Vagina (tissue), 2 donors: ENCODE measurements at regions of chr16 and their contacts with region 1.

Region 1: GRCh38 chr16:84617791-84618580 is at the start of gene COTL1:
- DNase-seq: peak in 1 of 2 donors; percentile 97
- H3K4me3 ChIP-seq: peak within 1 kb of the TSS; percentile 70 to 75
- H3K27ac ChIP-seq: peak within 1 kb of the TSS; percentile 76
- H3K4me1 ChIP-seq: peaks cover 30% of the 10 kb centered on the region
- H3K27me3 ChIP-seq: no peaks in the 10 kb centered on the region
- CTCF ChIP-seq: peak in 1 of 3 experiments; percentile 13
- POLR2A ChIP-seq: peak in 1 of 2 donors; percentile 93
- total RNA-seq, gene COTL1: 67.8 TPM

Region 2: GRCh38 chr16:84511180-84511824 is 106.7 kb before region 1 on chr16:
- intact Hi-C with region 1: loop called (anchors 2 kb)
- DNase-seq: no peak
- H3K4me3 ChIP-seq: no peak overlapping the region
- H3K27ac ChIP-seq: no peak overlapping the region
- H3K4me1 ChIP-seq: peaks cover 5% of the 10 kb centered on the region
- H3K27me3 ChIP-seq: no peaks in the 10 kb centered on the region
- CTCF ChIP-seq: peak; percentile 84 to 95 (median 93)
- POLR2A ChIP-seq: no peak

Region 3: GRCh38 chr16:84589975-84590719 is 27.8 kb before region 1 on chr16:
- intact Hi-C with region 1: loop called (anchors 1 kb)
- DNase-seq: no peak
- H3K4me3 ChIP-seq: no peak overlapping the region
- H3K27ac ChIP-seq: no peak overlapping the region
- H3K4me1 ChIP-seq: no peaks in the 10 kb centered on the region
- H3K27me3 ChIP-seq: no peaks in the 10 kb centered on the region
- CTCF ChIP-seq: no peak
- POLR2A ChIP-seq: no peak

Region 4: DNA sequence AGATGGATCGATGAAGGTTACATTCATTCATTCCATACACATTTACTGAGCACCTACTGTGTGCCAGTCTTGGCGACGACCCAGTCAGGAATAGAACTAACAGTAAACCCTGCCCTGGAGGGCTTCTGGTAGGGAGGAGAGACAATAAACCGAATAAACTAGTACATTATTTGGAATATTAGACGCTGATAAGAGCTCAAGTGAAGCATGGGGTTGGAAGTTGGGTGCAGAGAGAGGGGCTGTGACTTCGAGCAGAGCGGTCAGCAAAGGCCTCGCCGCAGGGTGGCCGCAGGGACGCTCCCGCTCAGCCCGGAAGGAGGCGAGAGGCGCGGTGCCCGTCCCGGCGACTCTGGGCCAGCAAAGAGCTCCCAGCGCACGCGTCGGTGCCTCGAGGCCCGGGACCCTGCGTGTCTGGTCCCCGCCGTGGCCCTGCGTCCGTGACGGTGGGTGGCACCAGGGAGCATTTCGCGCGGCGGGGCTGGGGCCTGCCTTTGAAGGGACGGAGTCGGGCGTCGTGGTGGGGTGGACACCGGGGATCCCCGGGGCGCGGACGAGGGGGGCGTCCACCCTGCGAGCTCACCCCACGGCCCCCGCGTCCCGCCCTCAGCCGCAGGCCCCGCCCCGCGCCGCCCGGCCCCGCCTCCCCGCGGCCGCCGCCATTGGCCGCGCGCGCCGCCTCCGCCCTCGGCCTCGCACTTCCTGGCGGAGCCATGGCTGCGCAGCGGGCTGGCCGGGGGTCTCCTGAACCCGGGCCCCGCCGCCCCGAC is 30.0 kb after region 1 on chr16 and contains the start of gene KLHL36:
- intact Hi-C with region 1: no loop called
- DNase-seq: no peak
- H3K4me3 ChIP-seq: peak within 1 kb of the TSS; percentile 84 to 98
- H3K27ac ChIP-seq: peak within 1 kb of the TSS; percentile 86
- H3K4me1 ChIP-seq: peaks cover 36% of the 10 kb centered on the region
- H3K27me3 ChIP-seq: no peaks in the 10 kb centered on the region
- CTCF ChIP-seq: peak in 1 of 3 experiments; percentile 16
- POLR2A ChIP-seq: peak in 1 of 2 donors; percentile 22
- total RNA-seq, gene KLHL36: 39.3 TPM

Region 5: GRCh38 chr16:84726079-84726668 is 108.2 kb after region 1 on chr16:
- intact Hi-C with region 1: loop called (anchors 2 kb)
- DNase-seq: peak in 1 of 2 donors; percentile 88
- H3K4me3 ChIP-seq: no peak overlapping the region
- H3K27ac ChIP-seq: peak overlapping the region; percentile 24
- H3K4me1 ChIP-seq: peaks cover 60% of the 10 kb centered on the region
- H3K27me3 ChIP-seq: no peaks in the 10 kb centered on the region
- CTCF ChIP-seq: peak; percentile 72 to 95 (median 89)
- POLR2A ChIP-seq: no peak

Region 6: GRCh38 chr16:84774810-84775209 is 156.8 kb after region 1 on chr16:
- intact Hi-C with region 1: no loop called
- DNase-seq: no peak
- H3K4me3 ChIP-seq: no peak overlapping the region
- H3K27ac ChIP-seq: peak overlapping the region; percentile 7
- H3K4me1 ChIP-seq: no peaks in the 10 kb centered on the region
- H3K27me3 ChIP-seq: no peaks in the 10 kb centered on the region
- CTCF ChIP-seq: no peak
- POLR2A ChIP-seq: no peak